ENCODE measurements at regions of chr3 and their contacts with region 1.

Region 1: GRCh38 chr3:8622873-8623691 is 21.5 kb downstream of the SSUH2 start:
- DNase-seq: no peak
- H3K4me3 ChIP-seq: peak overlapping the region in 1 of 4 donors; percentile 31
- H3K27ac ChIP-seq: no peak overlapping the region
- H3K4me1 ChIP-seq: peaks cover 0 to 42% (median 18%) of the 10 kb centered on the region in 3 donors
- H3K27me3 ChIP-seq: peaks cover 0 to 5% (median 0%) of the 10 kb centered on the region in 4 donors
- CTCF ChIP-seq: peak; percentile 75 to 95 (median 86)
- POLR2A ChIP-seq: no peak

Region 2: GRCh38 chr3:8441969-8442559 is 181.0 kb before region 1 on chr3:
- intact Hi-C with region 1: loop called (anchors 2 kb)
- DNase-seq: no peak
- H3K4me3 ChIP-seq: no peak overlapping the region
- H3K27ac ChIP-seq: peak overlapping the region in 2 of 4 donors; percentile 73 to 82
- H3K4me1 ChIP-seq: peaks cover 7 to 53% (median 33%) of the 10 kb centered on the region in 3 donors
- H3K27me3 ChIP-seq: no peaks in the 10 kb centered on the region
- CTCF ChIP-seq: peak in 5 of 6 experiments; percentile 64 to 79 (median 66)
- POLR2A ChIP-seq: no peak

Region 3: DNA sequence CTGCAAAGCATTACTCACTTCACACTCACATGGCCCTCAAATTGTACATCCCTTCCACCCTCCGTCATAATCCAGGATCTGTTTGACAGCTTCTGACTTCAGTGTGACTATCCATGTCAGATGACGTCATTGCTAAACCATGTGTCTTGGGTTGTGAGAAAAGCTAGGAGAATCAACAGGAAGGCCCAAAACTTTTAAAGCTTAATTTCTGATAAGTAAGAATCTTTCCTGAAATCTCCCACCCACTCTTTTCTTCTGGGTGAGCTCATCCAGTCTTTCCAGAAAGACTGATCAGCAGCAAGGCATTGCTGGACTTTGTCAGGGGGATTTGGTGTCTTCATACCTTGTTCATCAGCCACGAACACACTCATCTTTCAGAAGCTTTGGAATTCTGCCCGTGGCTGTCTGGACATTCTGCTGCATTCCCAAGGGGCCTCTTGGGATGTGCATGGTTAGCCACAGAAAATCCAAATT is 133.0 kb before region 1 on chr3:
- intact Hi-C with region 1: no loop called
- DNase-seq: no peak
- H3K4me3 ChIP-seq: no peak overlapping the region
- H3K27ac ChIP-seq: peak overlapping the region; percentile 21 to 79 (median 58)
- H3K4me1 ChIP-seq: peaks cover 5 to 50% (median 20%) of the 10 kb centered on the region in 3 donors
- H3K27me3 ChIP-seq: no peaks in the 10 kb centered on the region
- CTCF ChIP-seq: no peak
- POLR2A ChIP-seq: no peak

Measured in esophagus squamous epithelium (tissue), 5 donors.